Ovary (tissue), 10 donors: ENCODE measurements at regions of chr6 and their contacts with region 1.

Region 1: DNA sequence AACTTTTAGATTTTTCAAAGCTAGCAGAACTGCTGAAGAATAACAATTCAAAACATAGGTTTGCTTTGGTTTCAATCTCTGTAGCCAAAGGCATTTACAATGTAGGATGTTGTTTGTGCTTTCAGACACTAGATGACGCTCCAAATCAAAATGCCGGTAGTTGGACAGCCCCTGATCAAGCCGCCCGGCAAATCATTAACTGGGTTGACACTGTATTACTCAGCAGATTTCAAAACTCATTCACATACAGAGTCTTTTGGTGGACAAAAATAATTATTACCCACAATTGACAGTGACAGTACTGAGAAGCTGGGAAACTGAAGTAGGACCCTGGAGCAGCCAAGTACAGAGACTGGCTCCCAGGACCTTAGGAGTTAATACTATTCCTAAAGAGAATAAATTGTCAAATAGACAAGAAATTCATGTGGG is 21.3 kb upstream of the HFE start:
- DNase-seq: peak in 4 of 5 donors; percentile 38 to 75 (median 50)
- H3K4me3 ChIP-seq: no peak overlapping the region
- H3K27ac ChIP-seq: no peak overlapping the region
- H3K4me1 ChIP-seq: no peaks in the 10 kb centered on the region
- H3K27me3 ChIP-seq: no peaks in the 10 kb centered on the region
- CTCF ChIP-seq: peak; percentile 40 to 80 (median 79)
- EP300 ChIP-seq: no peak
- POLR2A ChIP-seq: no peak

Region 2: DNA sequence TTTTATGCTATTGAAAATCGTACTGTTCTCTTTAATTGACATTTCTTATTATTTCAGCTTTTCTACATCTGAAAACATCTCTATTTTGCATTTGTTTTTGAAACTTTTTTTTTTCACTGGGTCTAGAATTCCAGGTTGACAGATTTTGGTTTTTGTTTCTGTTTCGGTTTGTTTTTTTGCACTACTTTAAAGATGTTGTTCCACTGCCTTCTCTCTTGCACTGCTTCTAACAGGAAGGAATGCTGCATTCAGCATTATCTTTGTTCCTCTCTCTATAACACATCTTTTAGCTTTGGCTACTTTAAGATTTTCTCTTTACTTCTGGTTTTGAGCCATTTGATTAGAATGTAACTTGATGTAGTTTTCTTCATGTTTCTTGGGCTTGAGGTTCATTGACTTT is 214.0 kb before region 1 on chr6:
- intact Hi-C with region 1: no loop called
- DNase-seq: no peak
- H3K4me3 ChIP-seq: no peak overlapping the region
- H3K27ac ChIP-seq: no peak overlapping the region
- H3K4me1 ChIP-seq: no peaks in the 10 kb centered on the region
- H3K27me3 ChIP-seq: no peaks in the 10 kb centered on the region
- CTCF ChIP-seq: no peak
- EP300 ChIP-seq: no peak
- POLR2A ChIP-seq: no peak

Region 3: DNA sequence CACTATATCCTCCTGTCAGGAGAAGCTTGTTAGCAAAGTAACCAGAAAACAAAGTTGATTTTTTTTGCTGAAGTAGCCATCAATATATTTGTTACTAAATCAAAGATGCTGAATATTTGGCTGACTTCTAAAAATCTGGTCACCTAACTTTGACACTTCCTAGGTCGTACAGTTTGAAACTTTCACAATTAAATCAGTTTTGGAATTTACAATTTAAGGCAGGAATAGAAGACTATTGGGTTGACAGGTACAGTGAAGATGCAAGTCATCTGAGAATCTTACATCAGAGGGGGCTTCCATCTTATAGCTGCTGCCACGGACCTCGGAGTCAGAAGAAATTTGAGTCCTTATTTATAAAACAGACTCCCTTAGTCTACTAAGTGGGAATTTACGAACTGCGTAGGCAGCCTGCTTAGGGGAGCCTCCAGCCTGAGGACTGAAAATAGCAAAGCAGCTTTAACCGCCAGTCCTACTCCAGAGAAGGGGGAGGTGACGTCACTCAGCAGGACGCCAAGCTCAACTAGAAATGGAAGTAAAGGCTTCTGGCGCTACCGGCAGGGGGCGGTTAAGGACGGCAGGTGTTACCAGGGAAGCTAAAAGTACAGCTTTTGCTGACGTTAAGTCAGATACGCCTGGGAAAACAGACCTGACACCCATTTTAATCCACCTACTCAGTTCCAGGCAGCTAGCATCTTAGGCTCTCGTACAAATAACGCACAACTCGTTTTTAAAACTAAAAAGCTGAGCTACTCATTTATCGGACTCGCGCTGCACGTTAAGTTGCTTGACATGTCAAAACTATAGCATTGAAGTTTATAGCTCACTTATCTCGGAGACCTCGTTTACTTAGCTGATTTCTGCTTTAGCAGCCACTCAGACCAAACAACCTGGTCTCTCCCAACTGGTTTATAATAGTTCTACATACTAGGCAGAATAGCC is 39.8 kb before region 1 on chr6:
- intact Hi-C with region 1: no loop called
- DNase-seq: peak; percentile 94 to 98 (median 97)
- H3K4me3 ChIP-seq: peak overlapping the region; percentile 77
- H3K27ac ChIP-seq: peak overlapping the region; percentile 66 to 88
- H3K4me1 ChIP-seq: peaks cover 4% of the 10 kb centered on the region
- H3K27me3 ChIP-seq: no peaks in the 10 kb centered on the region
- CTCF ChIP-seq: peak; percentile 33 to 97 (median 91)
- EP300 ChIP-seq: no peak
- POLR2A ChIP-seq: peak; percentile 56

Region 4: GRCh38 chr6:26097268-26097875 is 31.4 kb after region 1 on chr6:
- intact Hi-C with region 1: loop called in 3 of 4 experiments (anchors 1 to 2 kb)
- DNase-seq: peak; percentile 50 to 73 (median 61)
- H3K4me3 ChIP-seq: no peak overlapping the region
- H3K27ac ChIP-seq: no peak overlapping the region
- H3K4me1 ChIP-seq: no peaks in the 10 kb centered on the region
- H3K27me3 ChIP-seq: no peaks in the 10 kb centered on the region
- CTCF ChIP-seq: peak; percentile 43 to 82 (median 77)
- EP300 ChIP-seq: no peak
- POLR2A ChIP-seq: no peak

Region 5: GRCh38 chr6:26115226-26115625 is 49.3 kb after region 1 on chr6:
- intact Hi-C with region 1: no loop called
- DNase-seq: no peak
- H3K4me3 ChIP-seq: no peak overlapping the region
- H3K27ac ChIP-seq: no peak overlapping the region
- H3K4me1 ChIP-seq: no peaks in the 10 kb centered on the region
- H3K27me3 ChIP-seq: no peaks in the 10 kb centered on the region
- CTCF ChIP-seq: no peak
- EP300 ChIP-seq: no peak
- POLR2A ChIP-seq: no peak